ENCODE measurements at regions of chr7 and their contacts with region 1.

Region 1: GRCh38 chr7:21253740-21254687 is 173.9 kb upstream of the SP4 start:
- DNase-seq: no peak
- ATAC-seq: peak; percentile 91
- H3K4me3 ChIP-seq: no peak overlapping the region
- H3K27ac ChIP-seq: no peak overlapping the region
- H3K4me1 ChIP-seq: no peaks in the 10 kb centered on the region
- H3K27me3 ChIP-seq: peaks cover 0 to 10% of the 10 kb centered on the region in 2 experiments; a peak in 2 of 4 replicates
- CTCF ChIP-seq: peak; percentile 63 to 66 (median 66)
- EP300 ChIP-seq: no peak
- POLR2A ChIP-seq: no peak
- RAD21 ChIP-seq: peak; percentile 66

Region 2: DNA sequence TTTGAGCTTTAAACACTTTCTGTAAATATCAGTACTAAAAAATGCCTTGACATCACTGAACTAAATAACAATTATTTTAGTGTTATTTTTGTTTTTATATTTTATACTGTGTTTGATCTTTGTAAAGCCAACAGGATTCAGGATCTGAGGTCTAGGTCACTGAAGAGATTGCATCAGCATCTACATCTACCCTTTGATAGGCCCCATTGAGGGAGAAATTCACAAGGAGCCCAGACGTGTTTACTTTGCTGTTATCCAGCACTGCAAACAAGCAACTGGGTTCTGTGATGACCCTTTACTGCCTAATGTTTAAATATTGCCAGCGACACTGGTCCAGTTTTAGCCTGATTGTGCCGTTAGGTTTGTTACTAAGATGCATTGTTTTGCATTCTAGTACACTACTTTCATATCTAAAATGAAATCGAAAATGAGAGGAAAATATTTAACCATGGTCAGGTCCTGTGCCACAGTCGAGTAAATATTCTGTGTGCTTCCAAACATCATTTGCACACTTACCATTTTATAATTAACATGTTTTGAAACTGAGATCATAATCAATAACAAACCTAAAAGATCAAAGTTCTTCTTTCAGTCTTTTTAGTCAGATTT is 516.1 kb before region 1 on chr7:
- CTCF ChIA-PET with region 1: no interaction called
- POLR2A ChIA-PET with region 1: no interaction called
- RAD21 ChIA-PET with region 1: no interaction called
- SMC1A ChIA-PET with region 1: no interaction called
- in situ Hi-C with region 1: no loop called
- intact Hi-C with region 1: no loop called
- DNase-seq: no peak
- ATAC-seq: peak; percentile 81
- H3K4me3 ChIP-seq: no peak overlapping the region
- H3K27ac ChIP-seq: no peak overlapping the region
- H3K4me1 ChIP-seq: no peaks in the 10 kb centered on the region
- H3K27me3 ChIP-seq: no peaks in the 10 kb centered on the region
- CTCF ChIP-seq: no peak
- EP300 ChIP-seq: no peak
- POLR2A ChIP-seq: no peak
- RAD21 ChIP-seq: no peak

Region 3: GRCh38 chr7:20778063-20778721 is 475.8 kb before region 1 on chr7:
- CTCF ChIA-PET with region 1: interaction called, 11 read pairs
- POLR2A ChIA-PET with region 1: no interaction called
- RAD21 ChIA-PET with region 1: interaction called, 15 read pairs
- SMC1A ChIA-PET with region 1: interaction called, 6 read pairs
- in situ Hi-C with region 1: loop called (anchors 5 kb)
- intact Hi-C with region 1: loop called (anchors 2 kb)
- DNase-seq: no peak
- ATAC-seq: peak; percentile 87
- H3K4me3 ChIP-seq: no peak overlapping the region
- H3K27ac ChIP-seq: no peak overlapping the region
- H3K4me1 ChIP-seq: no peaks in the 10 kb centered on the region
- H3K27me3 ChIP-seq: peaks cover 3 to 5% of the 10 kb centered on the region in 2 experiments
- CTCF ChIP-seq: peak; percentile 29 to 50 (median 45); a peak in 4 of 6 replicates
- EP300 ChIP-seq: no peak
- POLR2A ChIP-seq: no peak
- RAD21 ChIP-seq: peak; percentile 56

Region 4: DNA sequence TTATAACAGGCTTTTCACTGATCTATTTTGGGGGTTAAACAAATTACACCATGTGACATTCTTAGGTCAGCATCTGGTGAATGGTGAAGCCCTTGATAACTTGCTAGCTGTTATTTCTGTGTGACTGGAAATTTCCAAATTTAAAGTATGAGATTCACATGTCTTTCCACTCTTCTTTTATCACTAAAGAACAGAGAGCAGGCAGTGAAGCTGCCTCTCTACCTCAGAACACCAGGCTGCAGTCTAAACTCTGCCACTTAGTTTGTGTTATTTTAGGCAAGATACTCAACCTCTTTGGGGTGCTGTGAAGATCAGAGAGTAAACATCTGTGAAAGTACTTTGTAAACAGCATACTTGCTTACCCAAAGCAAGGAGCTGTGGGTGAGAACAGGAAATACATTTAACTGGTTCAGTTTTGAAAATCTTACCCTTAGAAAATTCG is 158.4 kb after region 1 on chr7:
- CTCF ChIA-PET with region 1: interaction called, 11 read pairs
- POLR2A ChIA-PET with region 1: no interaction called
- RAD21 ChIA-PET with region 1: interaction called, 18 read pairs
- SMC1A ChIA-PET with region 1: interaction called, 11 read pairs
- in situ Hi-C with region 1: no loop called
- intact Hi-C with region 1: no loop called
- DNase-seq: peak; percentile 43
- ATAC-seq: peak; percentile 79
- H3K4me3 ChIP-seq: no peak overlapping the region
- H3K27ac ChIP-seq: peak overlapping the region; percentile 70
- H3K4me1 ChIP-seq: peaks cover 11% of the 10 kb centered on the region
- H3K27me3 ChIP-seq: no peaks in the 10 kb centered on the region
- CTCF ChIP-seq: no peak
- EP300 ChIP-seq: no peak
- POLR2A ChIP-seq: no peak
- RAD21 ChIP-seq: 0 out of 2 replicates have a peak, but pooled peaks have one; percentile 1

Region 5: DNA sequence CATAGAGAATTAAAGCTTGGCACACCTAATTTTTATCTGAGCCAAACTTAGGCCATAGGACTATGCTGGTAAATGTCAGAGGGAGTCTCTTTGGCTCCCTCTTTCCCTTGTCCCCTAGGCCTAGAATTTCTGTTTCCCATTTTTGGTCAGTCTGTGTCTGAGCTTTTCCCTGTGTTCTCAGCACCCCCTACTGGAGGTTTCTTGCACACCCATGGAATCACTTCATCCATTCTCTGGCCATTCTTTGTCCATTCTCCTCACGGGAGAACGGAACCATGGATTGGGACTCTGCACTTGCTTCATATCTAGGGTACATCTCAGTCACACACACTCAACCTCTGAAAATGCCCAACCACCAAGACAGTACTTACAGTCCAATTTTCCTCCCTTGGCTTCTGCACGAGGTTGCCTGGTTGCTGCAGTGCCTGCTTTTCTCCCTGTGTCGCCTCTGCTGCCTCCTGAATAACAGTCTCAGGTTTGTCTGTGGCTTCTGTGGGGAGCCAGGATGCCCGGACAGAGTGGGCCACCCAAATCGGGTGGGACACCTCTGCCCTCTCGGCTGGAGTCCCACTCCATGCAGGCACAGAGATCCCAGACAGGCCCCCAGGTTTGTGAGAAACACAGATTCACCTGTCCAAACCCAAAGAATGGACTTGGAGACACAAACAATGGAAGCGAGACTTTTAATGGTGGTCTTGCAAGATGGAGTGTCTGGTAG is 253.8 kb after region 1 on chr7:
- CTCF ChIA-PET with region 1: interaction called, 8 read pairs
- POLR2A ChIA-PET with region 1: no interaction called
- RAD21 ChIA-PET with region 1: no interaction called
- SMC1A ChIA-PET with region 1: interaction called, 4 read pairs
- in situ Hi-C with region 1: loop called (anchors 5 kb)
- intact Hi-C with region 1: loop called (anchors 5 kb)
- DNase-seq: no peak
- ATAC-seq: peak; percentile 58
- H3K4me3 ChIP-seq: no peak overlapping the region
- H3K27ac ChIP-seq: no peak overlapping the region
- H3K4me1 ChIP-seq: no peaks in the 10 kb centered on the region
- H3K27me3 ChIP-seq: no peaks in the 10 kb centered on the region
- CTCF ChIP-seq: peak; percentile 37 to 42 (median 41); a peak in 4 of 6 replicates
- EP300 ChIP-seq: no peak
- POLR2A ChIP-seq: no peak
- RAD21 ChIP-seq: peak; percentile 45; the same call in 1 of the 2 replicates

Region 6: GRCh38 chr7:21568762-21569161 is 314.7 kb after region 1 on chr7:
- CTCF ChIA-PET with region 1: interaction called, 66 read pairs
- POLR2A ChIA-PET with region 1: no interaction called
- RAD21 ChIA-PET with region 1: interaction called, 30 read pairs
- SMC1A ChIA-PET with region 1: interaction called, 57 read pairs
- in situ Hi-C with region 1: loop called (anchors 5 kb)
- intact Hi-C with region 1: loop called (anchors 2 kb)
- DNase-seq: no peak
- ATAC-seq: peak; percentile 80
- H3K4me3 ChIP-seq: no peak overlapping the region
- H3K27ac ChIP-seq: no peak overlapping the region
- H3K4me1 ChIP-seq: no peaks in the 10 kb centered on the region
- H3K27me3 ChIP-seq: no peaks in the 10 kb centered on the region
- CTCF ChIP-seq: peak; percentile 27 to 56 (median 30); a peak in 4 of 6 replicates
- EP300 ChIP-seq: no peak
- POLR2A ChIP-seq: no peak
- RAD21 ChIP-seq: peak; percentile 82

Region 7: DNA sequence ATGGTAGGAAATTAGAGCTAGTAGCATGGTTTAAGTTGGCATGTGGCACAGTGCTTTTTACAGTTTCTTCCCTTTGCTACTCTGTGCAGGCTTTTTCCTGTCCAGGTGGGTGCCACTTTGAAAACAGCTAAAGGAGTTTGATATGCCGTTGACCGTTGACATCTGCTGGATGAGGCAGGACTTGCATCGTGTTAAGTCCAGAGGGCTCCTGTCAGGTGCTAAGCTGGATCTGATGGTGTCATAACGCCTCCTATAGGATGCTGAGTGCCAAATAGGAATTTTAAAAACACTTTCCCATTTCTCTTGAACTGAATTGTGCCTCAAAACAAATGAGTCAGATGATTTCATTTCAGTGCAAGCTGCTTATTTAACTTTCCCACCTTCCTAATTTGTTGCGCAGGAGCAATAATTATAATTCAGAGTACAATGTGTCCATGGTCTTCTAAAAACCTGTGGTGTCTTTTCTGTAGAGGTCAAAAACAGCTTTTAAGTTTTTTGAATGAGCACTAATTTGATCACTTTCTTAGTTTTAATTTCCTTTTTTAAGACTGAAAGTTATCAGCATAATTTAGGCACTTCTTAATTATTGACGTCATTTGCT is 513.4 kb after region 1 on chr7:
- CTCF ChIA-PET with region 1: interaction called, 31 read pairs
- POLR2A ChIA-PET with region 1: no interaction called
- RAD21 ChIA-PET with region 1: interaction called, 44 read pairs
- SMC1A ChIA-PET with region 1: interaction called, 55 read pairs
- in situ Hi-C with region 1: loop called (anchors 5 kb)
- intact Hi-C with region 1: loop called (anchors 1 kb)
- DNase-seq: peak; percentile 26
- ATAC-seq: peak; percentile 91
- H3K4me3 ChIP-seq: no peak overlapping the region
- H3K27ac ChIP-seq: no peak overlapping the region
- H3K4me1 ChIP-seq: no peaks in the 10 kb centered on the region
- H3K27me3 ChIP-seq: 0 out of 4 replicates have a peak, but pooled peaks cover 0 to 2% of the 10 kb centered on the region in 2 experiments
- CTCF ChIP-seq: peak; percentile 59 to 81 (median 76); a peak in 5 of 6 replicates
- EP300 ChIP-seq: no peak
- POLR2A ChIP-seq: no peak
- RAD21 ChIP-seq: peak; percentile 92

Region 8: GRCh38 chr7:22082886-22083703 is 829.1 kb after region 1 on chr7:
- CTCF ChIA-PET with region 1: interaction called, 16 read pairs
- POLR2A ChIA-PET with region 1: no interaction called
- RAD21 ChIA-PET with region 1: interaction called, 5 read pairs
- SMC1A ChIA-PET with region 1: interaction called, 4 read pairs
- in situ Hi-C with region 1: no loop called
- intact Hi-C with region 1: loop called (anchors 5 kb)
- DNase-seq: peak; percentile 35
- ATAC-seq: peak; percentile 99
- H3K4me3 ChIP-seq: peak overlapping the region; percentile 64
- H3K27ac ChIP-seq: peak overlapping the region; percentile 42
- H3K4me1 ChIP-seq: peaks cover 6% of the 10 kb centered on the region; the same call in 1 of the 2 replicates
- H3K27me3 ChIP-seq: peaks cover 0 to 2% of the 10 kb centered on the region in 2 experiments; a peak in 2 of 4 replicates
- CTCF ChIP-seq: peak; percentile 94 to 97 (median 97)
- EP300 ChIP-seq: no peak
- POLR2A ChIP-seq: peak; percentile 58; the same call in 1 of the 2 replicates
- RAD21 ChIP-seq: peak; percentile 77